ENCODE measurements at regions of chr10 and their contacts with region 1.

Region 1: DNA sequence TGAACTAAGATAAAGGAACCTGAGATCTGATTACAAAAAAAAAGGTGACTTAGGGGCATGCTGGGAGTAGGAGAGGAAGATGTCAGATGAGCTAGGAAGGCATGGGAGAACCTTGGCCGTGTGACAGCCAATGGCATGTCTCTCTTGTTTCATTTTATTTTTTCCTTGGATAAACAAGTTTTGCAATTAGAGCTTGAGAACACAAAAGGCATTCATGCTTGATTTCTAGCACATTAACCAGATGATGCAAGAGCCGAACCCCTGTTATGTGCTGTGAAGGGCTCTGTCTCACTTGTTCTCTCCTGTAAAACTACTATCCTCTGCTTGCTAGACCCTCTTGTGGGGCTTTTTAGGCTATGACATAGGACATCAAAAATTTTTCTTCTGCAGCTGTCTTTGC is 134.3 kb upstream of the ASAH2 start:
- DNase-seq: no peak
- ATAC-seq: no peak
- H3K4me3 ChIP-seq: no peak overlapping the region
- H3K27ac ChIP-seq: no peak overlapping the region
- H3K4me1 ChIP-seq: peaks cover 29% of the 10 kb centered on the region
- H3K27me3 ChIP-seq: no peaks in the 10 kb centered on the region
- CTCF ChIP-seq: no peak
- EP300 ChIP-seq: no peak
- POLR2A ChIP-seq: no peak
- RAD21 ChIP-seq: no peak

Region 2: GRCh38 chr10:50312464-50313437 is 72.9 kb before region 1 on chr10:
- CTCF ChIA-PET with region 1: interaction called, 4 read pairs
- POLR2A ChIA-PET with region 1: no interaction called
- RAD21 ChIA-PET with region 1: no interaction called
- SMC1A ChIA-PET with region 1: interaction called, 15 read pairs
- in situ Hi-C with region 1: no loop called
- intact Hi-C with region 1: no loop called
- DNase-seq: no peak
- ATAC-seq: no peak
- H3K4me3 ChIP-seq: no peak overlapping the region
- H3K27ac ChIP-seq: no peak overlapping the region
- H3K4me1 ChIP-seq: peaks cover 6% of the 10 kb centered on the region; the same call in 1 of the 2 replicates
- H3K27me3 ChIP-seq: no peaks in the 10 kb centered on the region
- CTCF ChIP-seq: no peak
- EP300 ChIP-seq: no peak
- POLR2A ChIP-seq: no peak
- RAD21 ChIP-seq: no peak

Region 3: DNA sequence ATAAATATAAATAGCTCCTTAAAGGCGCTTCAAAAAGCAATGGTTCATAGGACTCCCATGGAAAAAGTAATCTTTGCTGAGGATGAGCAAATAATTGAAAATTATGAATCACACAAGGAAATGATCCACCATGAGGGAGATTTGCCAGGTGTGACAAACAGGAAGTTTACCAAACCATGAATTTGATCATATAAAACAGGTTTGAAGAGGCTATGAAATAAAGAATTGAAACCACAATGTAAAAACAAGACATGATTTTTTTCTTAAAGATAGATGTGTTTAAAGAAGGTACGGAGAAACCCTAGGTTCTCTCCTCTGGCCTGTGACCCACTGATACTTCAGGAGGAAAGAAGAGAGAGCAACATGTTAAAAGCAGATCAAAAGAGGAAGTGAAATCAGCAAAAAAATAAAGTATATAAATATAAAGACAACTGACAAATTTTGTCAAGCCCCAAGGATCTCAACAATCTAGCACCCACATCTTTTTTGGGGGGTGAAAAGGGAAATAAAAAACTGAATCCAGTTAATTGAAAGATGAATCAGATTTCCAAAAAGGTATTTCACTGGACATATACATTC is 23.0 kb before region 1 on chr10:
- CTCF ChIA-PET with region 1: interaction called, 27 read pairs
- POLR2A ChIA-PET with region 1: interaction called, 6 read pairs
- RAD21 ChIA-PET with region 1: interaction called, 9 read pairs
- SMC1A ChIA-PET with region 1: interaction called, 23 read pairs
- in situ Hi-C with region 1: no loop called
- intact Hi-C with region 1: no loop called
- DNase-seq: peak; percentile 79
- ATAC-seq: peak; percentile 90
- H3K4me3 ChIP-seq: peak overlapping the region; percentile 36
- H3K27ac ChIP-seq: peak overlapping the region; percentile 88
- H3K4me1 ChIP-seq: peaks cover 25% of the 10 kb centered on the region
- H3K27me3 ChIP-seq: no peaks in the 10 kb centered on the region
- CTCF ChIP-seq: no peak
- EP300 ChIP-seq: peak in 1 of 2 experiments; percentile 50; a peak in 1 of 4 replicates
- POLR2A ChIP-seq: no peak
- RAD21 ChIP-seq: no peak

Region 4: GRCh38 chr10:50367732-50368131 is 17.9 kb before region 1 on chr10:
- CTCF ChIA-PET with region 1: interaction called, 27 read pairs
- POLR2A ChIA-PET with region 1: interaction called, 3 read pairs
- RAD21 ChIA-PET with region 1: interaction called, 9 read pairs
- SMC1A ChIA-PET with region 1: interaction called, 30 read pairs
- in situ Hi-C with region 1: no loop called
- intact Hi-C with region 1: no loop called
- DNase-seq: no peak
- ATAC-seq: peak; percentile 62
- H3K4me3 ChIP-seq: no peak overlapping the region
- H3K27ac ChIP-seq: no peak overlapping the region
- H3K4me1 ChIP-seq: peaks cover 17% of the 10 kb centered on the region
- H3K27me3 ChIP-seq: no peaks in the 10 kb centered on the region
- CTCF ChIP-seq: peak; percentile 29 to 43 (median 30); a peak in 4 of 6 replicates
- EP300 ChIP-seq: no peak
- POLR2A ChIP-seq: no peak
- RAD21 ChIP-seq: peak; percentile 49

Region 5: DNA sequence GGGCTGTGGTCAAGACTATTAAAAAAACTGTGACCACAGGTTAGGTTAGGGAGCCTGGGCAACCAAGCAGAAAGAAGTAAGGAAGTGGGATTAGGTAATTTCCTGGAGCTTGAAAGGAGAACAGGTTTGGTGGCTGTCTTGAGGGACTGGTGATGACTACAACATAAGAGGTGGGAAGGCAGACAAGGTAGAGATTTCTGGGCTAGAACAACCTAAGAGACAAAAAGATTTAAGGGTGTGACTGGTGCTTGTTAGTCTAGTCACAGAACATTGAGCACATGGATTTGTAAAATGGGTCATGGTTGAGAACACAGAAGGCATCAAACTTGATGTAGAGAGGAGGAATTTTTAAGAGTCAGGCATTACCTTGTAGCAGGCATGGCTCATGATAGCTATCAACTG is 10.6 kb before region 1 on chr10:
- CTCF ChIA-PET with region 1: interaction called, 16 read pairs
- POLR2A ChIA-PET with region 1: interaction called, 14 read pairs
- RAD21 ChIA-PET with region 1: interaction called, 12 read pairs
- SMC1A ChIA-PET with region 1: interaction called, 30 read pairs
- in situ Hi-C with region 1: no loop called
- intact Hi-C with region 1: no loop called
- DNase-seq: no peak
- ATAC-seq: peak; percentile 51
- H3K4me3 ChIP-seq: no peak overlapping the region
- H3K27ac ChIP-seq: no peak overlapping the region
- H3K4me1 ChIP-seq: peaks cover 14% of the 10 kb centered on the region
- H3K27me3 ChIP-seq: no peaks in the 10 kb centered on the region
- CTCF ChIP-seq: no peak
- EP300 ChIP-seq: no peak
- POLR2A ChIP-seq: no peak
- RAD21 ChIP-seq: no peak

Region 6: GRCh38 chr10:50396491-50397311 is 11.1 kb after region 1 on chr10:
- CTCF ChIA-PET with region 1: interaction called, 14 read pairs
- POLR2A ChIA-PET with region 1: interaction called, 30 read pairs
- RAD21 ChIA-PET with region 1: interaction called, 5 read pairs
- SMC1A ChIA-PET with region 1: interaction called, 13 read pairs
- in situ Hi-C with region 1: no loop called
- intact Hi-C with region 1: no loop called
- DNase-seq: no peak
- ATAC-seq: peak; percentile 92
- H3K4me3 ChIP-seq: peak overlapping the region; percentile 4; the same call in 1 of the 2 replicates
- H3K27ac ChIP-seq: peak overlapping the region; percentile 65
- H3K4me1 ChIP-seq: peaks cover 17% of the 10 kb centered on the region
- H3K27me3 ChIP-seq: no peaks in the 10 kb centered on the region
- CTCF ChIP-seq: no peak
- EP300 ChIP-seq: 0 out of 4 replicates have a peak, but pooled peaks of 1 of the 2 experiments have one; percentile 16
- POLR2A ChIP-seq: no peak
- RAD21 ChIP-seq: no peak